Mammary epithelial cell (primary cell): ENCODE measurements at regions of chr1 and their contacts with region 1.

Region 1: GRCh38 chr1:18256282-18257235 is 149.0 kb downstream of the IGSF21 start:
- DNase-seq: peak; percentile 3
- H3K4me3 ChIP-seq: no peak overlapping the region
- H3K27ac ChIP-seq: no peak overlapping the region
- H3K4me1 ChIP-seq: no peaks in the 10 kb centered on the region
- H3K27me3 ChIP-seq: no peaks in the 10 kb centered on the region
- CTCF ChIP-seq: no peak

Region 2: GRCh38 chr1:18309552-18310155 is 53.1 kb after region 1 on chr1:
- CTCF ChIA-PET with region 1: no interaction called
- dilution Hi-C with region 1: loop called (anchors 5 kb)
- in situ Hi-C with region 1: no loop called
- intact Hi-C with region 1: no loop called
- DNase-seq: no peak
- H3K4me3 ChIP-seq: no peak overlapping the region
- H3K27ac ChIP-seq: no peak overlapping the region
- H3K4me1 ChIP-seq: no peaks in the 10 kb centered on the region
- H3K27me3 ChIP-seq: no peaks in the 10 kb centered on the region
- CTCF ChIP-seq: no peak

Region 3: DNA sequence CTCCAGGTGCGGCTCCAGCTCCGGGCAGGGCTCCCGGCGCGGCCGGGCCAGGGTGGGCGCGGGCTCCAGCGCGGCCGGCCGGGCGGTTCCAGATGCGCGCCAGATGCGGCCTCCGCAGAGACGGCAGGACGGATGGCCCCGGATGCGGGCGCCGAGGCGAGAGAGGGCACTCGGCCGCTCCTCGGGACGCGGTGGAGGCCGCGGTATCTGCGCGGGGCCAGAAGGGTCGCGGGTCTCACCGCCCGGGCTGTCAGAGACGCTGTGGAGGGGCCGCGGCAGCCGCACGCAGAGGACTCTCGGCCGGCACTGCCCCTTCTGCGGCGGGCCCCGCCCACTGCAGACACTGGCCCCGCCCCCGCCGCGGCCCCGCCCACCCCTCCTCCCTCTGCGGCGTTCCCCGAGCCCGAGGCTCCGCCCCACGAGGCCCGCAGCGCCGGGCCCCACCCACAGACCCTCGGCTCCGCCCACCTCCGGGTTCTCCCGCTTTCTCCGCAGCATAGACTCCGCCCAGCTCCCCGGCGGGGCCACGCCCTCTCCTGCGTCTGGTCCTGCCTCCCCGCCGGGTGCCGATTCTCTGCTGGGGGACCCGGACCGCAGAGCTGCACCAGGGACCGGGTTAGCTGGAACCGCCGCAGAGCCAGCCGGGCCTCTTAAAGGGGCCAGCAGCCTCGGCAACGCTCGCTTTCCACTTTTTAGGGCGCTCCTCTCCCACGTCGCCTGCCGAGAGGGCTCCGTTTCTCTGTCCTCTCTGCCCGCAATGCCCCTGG is 700.0 kb after region 1 on chr1 and contains the start of gene IFFO2:
- CTCF ChIA-PET with region 1: no interaction called
- dilution Hi-C with region 1: no loop called
- in situ Hi-C with region 1: no loop called
- intact Hi-C with region 1: no loop called
- DNase-seq: peak; percentile 91
- H3K4me3 ChIP-seq: peak within 1 kb of the TSS; percentile 76 to 93 (median 88)
- H3K27ac ChIP-seq: peak within 1 kb of the TSS; percentile 92
- H3K4me1 ChIP-seq: peaks cover 33% of the 10 kb centered on the region
- H3K27me3 ChIP-seq: no peaks in the 10 kb centered on the region
- CTCF ChIP-seq: no peak
- total RNA-seq, gene IFFO2: 94.8 to 304 TPM